ENCODE measurements at regions of chr5 and their contacts with region 1.

Region 1: GRCh38 chr5:14142827-14143548 is at the start of gene TRIO:
- DNase-seq: no peak
- ATAC-seq: peak; percentile 63
- H3K4me3 ChIP-seq: peak within 1 kb of the TSS; percentile 100
- H3K27ac ChIP-seq: peak within 1 kb of the TSS; percentile 70
- H3K4me1 ChIP-seq: peaks cover 14% of the 10 kb centered on the region
- H3K27me3 ChIP-seq: no peaks in the 10 kb centered on the region
- CTCF ChIP-seq: peak; percentile 44 to 56 (median 53); a peak in 5 of 6 replicates
- EP300 ChIP-seq: no peak
- POLR2A ChIP-seq: peak; percentile 73
- RAD21 ChIP-seq: 0 out of 2 replicates have a peak, but pooled peaks have one; percentile 11
- polyA plus RNA-seq, gene TRIO: 5.1 to 5.8 TPM

Region 2: GRCh38 chr5:13921578-13921977 is 221.4 kb before region 1 on chr5:
- CTCF ChIA-PET with region 1: no interaction called
- POLR2A ChIA-PET with region 1: no interaction called
- RAD21 ChIA-PET with region 1: no interaction called
- SMC1A ChIA-PET with region 1: no interaction called
- in situ Hi-C with region 1: no loop called
- intact Hi-C with region 1: no loop called
- DNase-seq: no peak
- ATAC-seq: no peak
- H3K4me3 ChIP-seq: no peak overlapping the region
- H3K27ac ChIP-seq: no peak overlapping the region
- H3K4me1 ChIP-seq: no peaks in the 10 kb centered on the region
- H3K27me3 ChIP-seq: no peaks in the 10 kb centered on the region
- CTCF ChIP-seq: no peak
- EP300 ChIP-seq: no peak
- POLR2A ChIP-seq: no peak
- RAD21 ChIP-seq: no peak

Region 3: GRCh38 chr5:14168144-14168792 is 25.3 kb after region 1 on chr5:
- CTCF ChIA-PET with region 1: interaction called, 5 read pairs
- POLR2A ChIA-PET with region 1: interaction called, 314 read pairs
- RAD21 ChIA-PET with region 1: interaction called, 344 read pairs
- SMC1A ChIA-PET with region 1: interaction called, 430 read pairs
- in situ Hi-C with region 1: no loop called
- intact Hi-C with region 1: loop called (anchors 2 kb)
- DNase-seq: no peak
- ATAC-seq: peak; percentile 63
- H3K4me3 ChIP-seq: peak overlapping the region; percentile 50
- H3K27ac ChIP-seq: peak overlapping the region; percentile 91
- H3K4me1 ChIP-seq: peaks cover 41% of the 10 kb centered on the region
- H3K27me3 ChIP-seq: no peaks in the 10 kb centered on the region
- CTCF ChIP-seq: no peak
- EP300 ChIP-seq: no peak
- POLR2A ChIP-seq: peak; percentile 14; the same call in 1 of the 2 replicates
- RAD21 ChIP-seq: no peak

Region 4: DNA sequence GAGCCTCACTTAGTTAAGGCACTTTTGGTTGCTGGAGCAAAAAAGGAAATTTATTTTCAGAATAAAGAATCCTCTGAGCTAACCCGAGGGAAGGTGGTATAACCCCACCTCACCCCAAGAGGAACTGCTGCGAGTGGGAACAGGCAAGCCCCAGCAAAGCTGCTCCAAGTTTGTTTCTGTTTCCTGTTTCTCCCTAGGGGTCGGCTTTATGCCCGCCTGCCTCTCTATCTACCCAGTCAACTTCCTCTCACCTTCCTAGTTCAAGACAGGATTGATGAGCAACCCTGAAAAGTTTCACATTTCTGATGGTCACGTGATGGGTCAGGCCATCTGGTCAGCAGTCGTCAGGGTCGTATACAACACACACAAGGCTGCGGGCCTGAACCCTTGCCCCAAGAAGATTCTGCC is 31.2 kb after region 1 on chr5:
- CTCF ChIA-PET with region 1: interaction called, 5 read pairs
- POLR2A ChIA-PET with region 1: interaction called, 314 read pairs
- RAD21 ChIA-PET with region 1: interaction called, 344 read pairs
- SMC1A ChIA-PET with region 1: interaction called, 430 read pairs
- in situ Hi-C with region 1: no loop called
- intact Hi-C with region 1: loop called (anchors 2 kb)
- DNase-seq: peak; percentile 63
- ATAC-seq: peak; percentile 52
- H3K4me3 ChIP-seq: peak overlapping the region; percentile 62
- H3K27ac ChIP-seq: peak overlapping the region; percentile 71
- H3K4me1 ChIP-seq: peaks cover 57% of the 10 kb centered on the region
- H3K27me3 ChIP-seq: no peaks in the 10 kb centered on the region
- CTCF ChIP-seq: no peak
- EP300 ChIP-seq: no peak
- POLR2A ChIP-seq: 0 out of 2 replicates have a peak, but pooled peaks have one; percentile 29
- RAD21 ChIP-seq: no peak

Region 5: GRCh38 chr5:14258840-14259239 is 115.9 kb after region 1 on chr5:
- CTCF ChIA-PET with region 1: interaction called, 7 read pairs
- POLR2A ChIA-PET with region 1: interaction called, 8 read pairs
- RAD21 ChIA-PET with region 1: interaction called, 11 read pairs
- SMC1A ChIA-PET with region 1: interaction called, 10 read pairs
- in situ Hi-C with region 1: no loop called
- intact Hi-C with region 1: loop called (anchors 5 kb)
- DNase-seq: no peak
- ATAC-seq: peak; percentile 65
- H3K4me3 ChIP-seq: peak overlapping the region; percentile 56; the same call in 1 of the 2 replicates
- H3K27ac ChIP-seq: peak overlapping the region; percentile 14
- H3K4me1 ChIP-seq: peaks cover 37% of the 10 kb centered on the region
- H3K27me3 ChIP-seq: no peaks in the 10 kb centered on the region
- CTCF ChIP-seq: peak in 2 of 3 experiments; percentile 24 to 33; a peak in 1 of 6 replicates
- EP300 ChIP-seq: no peak
- POLR2A ChIP-seq: no peak
- RAD21 ChIP-seq: no peak

Region 6: DNA sequence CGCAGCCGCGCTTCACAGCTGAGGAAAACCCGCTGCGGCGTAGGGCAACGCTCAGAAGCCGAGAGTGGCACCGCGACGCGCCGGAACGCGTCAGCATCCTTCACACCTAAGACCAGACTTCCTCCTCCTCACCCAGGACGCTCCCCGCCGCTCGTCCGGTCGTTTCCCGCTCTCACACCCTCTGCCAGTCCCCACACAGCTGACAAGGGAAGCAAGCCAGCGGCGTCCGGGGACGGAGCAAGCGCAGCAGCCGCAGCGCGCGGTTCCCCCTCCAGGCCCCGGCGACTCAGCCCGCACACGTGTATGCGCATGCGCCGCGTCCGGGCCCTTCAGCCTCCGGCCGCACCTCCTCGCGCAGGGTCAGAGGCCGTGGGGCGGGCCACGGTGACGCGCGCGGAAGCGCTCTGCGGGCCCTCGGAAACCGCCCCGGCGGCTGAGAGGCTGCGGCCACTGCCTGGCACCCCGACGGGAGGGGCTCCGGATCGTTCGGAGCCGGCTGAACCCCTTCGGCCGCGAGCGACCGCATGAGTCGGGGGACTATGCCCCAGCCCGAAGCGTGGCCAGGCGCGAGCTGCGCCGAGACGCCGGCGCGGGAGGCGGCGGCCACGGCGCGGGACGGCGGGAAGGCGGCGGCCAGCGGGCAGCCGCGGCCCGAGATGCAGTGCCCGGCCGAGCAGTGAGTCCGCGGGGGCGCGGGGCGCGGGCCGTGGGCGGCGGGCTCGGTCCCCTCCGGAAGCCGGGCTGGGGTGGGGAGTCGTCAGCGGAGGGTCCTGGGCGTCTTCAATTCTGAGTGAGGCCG is 521.5 kb after region 1 on chr5 and contains the start of gene OTULIN:
- CTCF ChIA-PET with region 1: interaction called, 3 read pairs
- POLR2A ChIA-PET with region 1: no interaction called
- RAD21 ChIA-PET with region 1: interaction called, 4 read pairs
- SMC1A ChIA-PET with region 1: interaction called, 3 read pairs
- in situ Hi-C with region 1: no loop called
- intact Hi-C with region 1: loop called (anchors 5 kb)
- DNase-seq: peak; percentile 80
- ATAC-seq: peak; percentile 74
- H3K4me3 ChIP-seq: peak within 1 kb of the TSS; percentile 84
- H3K27ac ChIP-seq: peak within 1 kb of the TSS; percentile 90
- H3K4me1 ChIP-seq: peaks cover 3% of the 10 kb centered on the region
- H3K27me3 ChIP-seq: no peaks in the 10 kb centered on the region
- CTCF ChIP-seq: no peak
- EP300 ChIP-seq: 0 out of 4 replicates have a peak, but pooled peaks of 1 of the 2 experiments have one; percentile 9
- POLR2A ChIP-seq: peak; percentile 95
- RAD21 ChIP-seq: no peak
- polyA plus RNA-seq, gene OTULIN: 6.6 to 9.9 TPM

Measured in GM12878 (cell line).